Activated CD8-positive, alpha-beta T cell treated with anti-CD3 and anti-CD28 coated beads, Interleukin-2, amount 10 ng/mL, durations not matched to agents 7 days and 5 days (primary cell): ENCODE measurements at regions of chrX and their contacts with region 1.

Region 1: DNA sequence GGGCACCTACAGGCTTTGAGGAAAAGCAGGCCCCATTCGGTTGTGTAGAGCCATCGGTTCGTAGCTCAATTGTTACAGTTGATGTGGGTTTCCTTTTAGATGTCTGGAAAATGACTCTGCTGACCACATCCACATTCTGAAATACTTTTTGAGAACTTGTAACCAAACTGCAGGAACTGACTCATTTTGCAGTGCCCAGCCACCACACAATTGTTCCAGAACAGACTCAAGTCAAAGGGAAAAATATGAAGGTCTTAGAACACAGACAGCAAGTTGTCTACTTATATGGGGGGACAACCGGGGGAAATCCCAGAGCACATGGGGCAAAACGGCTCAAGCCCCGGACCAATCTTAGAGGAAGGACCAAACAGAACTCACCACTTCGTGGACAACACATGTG is 557.6 kb upstream of the DIPK2B start:
- DNase-seq: peak; percentile 67
- ATAC-seq: peak; percentile 52
- H3K4me3 Mint-ChIP-seq: peak overlapping the region; percentile 79
- H3K27ac Mint-ChIP-seq: peak overlapping the region; percentile 93
- H3K4me1 Mint-ChIP-seq: peaks cover 68% of the 10 kb centered on the region
- H3K27me3 Mint-ChIP-seq: no peaks in the 10 kb centered on the region

Region 2: DNA sequence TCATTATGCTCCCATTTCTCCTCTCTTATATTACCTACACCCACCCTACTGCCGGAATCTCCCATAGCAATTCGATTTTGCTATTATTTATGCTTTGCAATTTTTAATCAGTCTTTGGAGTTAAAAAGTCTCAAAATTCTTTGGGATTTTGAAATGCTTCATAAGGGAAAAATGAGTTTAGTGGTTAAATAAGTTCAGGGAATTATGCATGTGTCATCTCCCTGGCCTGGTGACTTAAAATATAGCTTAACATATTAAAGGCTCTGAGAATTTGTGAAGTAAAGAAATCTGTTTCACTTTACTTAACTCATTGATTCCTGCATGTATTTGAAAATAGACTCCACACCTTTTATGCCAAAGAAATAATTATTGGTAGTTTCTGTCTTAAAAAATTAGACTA is 372.6 kb before region 1 on chrX:
- CTCF ChIA-PET with region 1: no interaction called
- POLR2A ChIA-PET with region 1: no interaction called
- DNase-seq: no peak
- ATAC-seq: no peak
- H3K4me3 Mint-ChIP-seq: no peak overlapping the region
- H3K27ac Mint-ChIP-seq: no peak overlapping the region
- H3K4me1 Mint-ChIP-seq: no peaks in the 10 kb centered on the region
- H3K27me3 Mint-ChIP-seq: no peaks in the 10 kb centered on the region

Region 3: DNA sequence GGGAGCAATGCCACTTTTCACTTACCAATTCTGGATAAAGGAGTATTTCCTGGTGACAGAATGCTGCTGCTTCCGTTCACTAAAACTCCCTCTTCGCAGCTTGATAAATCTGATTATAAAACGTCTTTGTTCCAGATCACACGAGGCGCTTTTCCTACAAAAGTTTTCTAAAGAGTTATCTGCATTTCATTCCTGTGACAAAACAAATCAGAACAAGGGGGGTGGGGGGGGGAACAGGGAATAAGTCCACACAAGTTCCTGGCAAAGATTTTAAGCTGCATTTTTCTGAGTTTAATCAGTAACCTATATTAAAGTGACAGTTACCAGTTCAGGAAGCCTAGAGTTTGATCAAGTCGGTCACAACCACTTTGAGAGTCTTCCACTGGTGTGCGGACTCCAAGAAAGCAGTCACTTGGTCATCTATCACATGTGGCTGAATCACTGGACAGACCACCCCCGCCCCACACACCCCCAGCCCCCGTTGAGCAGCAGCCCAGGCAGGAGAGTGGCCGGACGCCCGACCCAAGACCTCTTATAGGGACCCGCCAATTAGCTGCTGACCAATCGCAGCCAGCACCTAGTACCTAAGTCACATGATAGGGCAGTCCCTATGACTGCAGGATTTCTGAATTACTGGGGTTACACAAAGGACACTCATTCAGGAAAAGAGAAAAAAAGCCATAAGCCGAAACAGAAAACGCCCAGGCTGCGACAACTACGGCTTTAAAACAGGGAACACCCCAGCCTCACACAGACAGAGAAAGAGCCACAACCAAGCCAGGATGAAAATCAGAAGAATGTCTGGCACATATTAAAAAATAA is 11.7 kb after region 1 on chrX:
- CTCF ChIA-PET with region 1: interaction called, 19 read pairs
- POLR2A ChIA-PET with region 1: interaction called, 83 read pairs
- DNase-seq: peak; percentile 69
- ATAC-seq: peak; percentile 67
- H3K4me3 Mint-ChIP-seq: peak overlapping the region; percentile 85
- H3K27ac Mint-ChIP-seq: peak overlapping the region; percentile 91
- H3K4me1 Mint-ChIP-seq: peaks cover 54% of the 10 kb centered on the region
- H3K27me3 Mint-ChIP-seq: no peaks in the 10 kb centered on the region